CD8-positive, alpha-beta T cell (primary cell): ENCODE measurements at regions of chr6 and their contacts with region 1.

Region 1: DNA sequence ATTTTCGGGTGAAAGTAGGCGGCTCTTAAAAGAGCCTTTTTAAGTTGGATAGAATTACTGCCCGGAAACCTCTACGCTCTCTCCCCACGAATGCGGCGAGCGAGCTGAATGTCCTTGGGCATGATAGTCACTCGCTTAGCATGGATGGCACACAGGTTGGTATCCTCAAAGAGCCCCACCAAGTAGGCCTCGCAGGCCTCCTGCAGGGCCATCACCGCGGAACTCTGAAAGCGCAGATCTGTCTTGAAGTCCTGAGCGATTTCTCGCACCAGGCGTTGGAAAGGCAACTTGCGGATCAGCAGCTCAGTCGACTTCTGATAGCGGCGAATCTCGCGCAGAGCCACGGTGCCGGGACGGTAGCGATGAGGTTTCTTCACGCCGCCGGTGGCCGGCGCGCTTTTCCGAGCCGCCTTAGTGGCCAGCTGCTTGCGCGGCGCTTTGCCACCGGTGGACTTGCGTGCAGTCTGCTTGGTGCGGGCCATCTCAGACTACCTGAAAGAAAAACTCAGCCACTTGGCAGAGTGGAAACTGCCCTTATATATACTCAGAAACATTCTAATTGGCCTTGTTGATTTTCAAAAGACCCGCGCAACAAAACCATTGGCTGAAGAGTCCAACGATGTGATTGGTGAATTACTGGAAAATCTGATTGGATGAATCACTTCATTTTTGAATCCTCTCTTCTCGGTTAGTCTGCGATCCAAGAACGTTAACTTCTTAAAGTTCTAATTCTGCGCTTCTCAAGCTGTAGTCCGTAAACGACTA is 93.9 kb upstream of the BTN3A2 start:
- DNase-seq: peak; percentile 68 to 91 (median 80)
- ATAC-seq: peak; percentile 22
- H3K4me3 ChIP-seq: peak overlapping the region; percentile 65 to 67
- H3K4me3 Mint-ChIP-seq: no peak overlapping the region
- H3K27ac ChIP-seq: peak overlapping the region; percentile 73 to 92
- H3K27ac Mint-ChIP-seq: peak overlapping the region; percentile 73
- H3K4me1 ChIP-seq: peaks cover 22% of the 10 kb centered on the region
- H3K4me1 Mint-ChIP-seq: peaks cover 13% of the 10 kb centered on the region
- H3K27me3 ChIP-seq: no peaks in the 10 kb centered on the region
- H3K27me3 Mint-ChIP-seq: no peaks in the 10 kb centered on the region
- CTCF ChIP-seq: no peak

Region 2: GRCh38 chr6:26103770-26104456 is 167.2 kb before region 1 on chr6:
- CTCF ChIA-PET with region 1: no interaction called
- POLR2A ChIA-PET with region 1: interaction called, 13 read pairs
- intact Hi-C with region 1: loop called in 1 of 2 experiments (anchors 5 kb)
- DNase-seq: peak; percentile 84 to 97 (median 89)
- ATAC-seq: peak; percentile 91
- H3K4me3 ChIP-seq: peak overlapping the region; percentile 52 to 58
- H3K4me3 Mint-ChIP-seq: peak overlapping the region; percentile 85
- H3K27ac ChIP-seq: peak overlapping the region; percentile 85 to 92
- H3K27ac Mint-ChIP-seq: peak overlapping the region; percentile 98
- H3K4me1 ChIP-seq: peaks cover 7% of the 10 kb centered on the region
- H3K4me1 Mint-ChIP-seq: peaks cover 17% of the 10 kb centered on the region
- H3K27me3 ChIP-seq: no peaks in the 10 kb centered on the region
- H3K27me3 Mint-ChIP-seq: no peaks in the 10 kb centered on the region
- CTCF ChIP-seq: peak; percentile 67

Region 3: DNA sequence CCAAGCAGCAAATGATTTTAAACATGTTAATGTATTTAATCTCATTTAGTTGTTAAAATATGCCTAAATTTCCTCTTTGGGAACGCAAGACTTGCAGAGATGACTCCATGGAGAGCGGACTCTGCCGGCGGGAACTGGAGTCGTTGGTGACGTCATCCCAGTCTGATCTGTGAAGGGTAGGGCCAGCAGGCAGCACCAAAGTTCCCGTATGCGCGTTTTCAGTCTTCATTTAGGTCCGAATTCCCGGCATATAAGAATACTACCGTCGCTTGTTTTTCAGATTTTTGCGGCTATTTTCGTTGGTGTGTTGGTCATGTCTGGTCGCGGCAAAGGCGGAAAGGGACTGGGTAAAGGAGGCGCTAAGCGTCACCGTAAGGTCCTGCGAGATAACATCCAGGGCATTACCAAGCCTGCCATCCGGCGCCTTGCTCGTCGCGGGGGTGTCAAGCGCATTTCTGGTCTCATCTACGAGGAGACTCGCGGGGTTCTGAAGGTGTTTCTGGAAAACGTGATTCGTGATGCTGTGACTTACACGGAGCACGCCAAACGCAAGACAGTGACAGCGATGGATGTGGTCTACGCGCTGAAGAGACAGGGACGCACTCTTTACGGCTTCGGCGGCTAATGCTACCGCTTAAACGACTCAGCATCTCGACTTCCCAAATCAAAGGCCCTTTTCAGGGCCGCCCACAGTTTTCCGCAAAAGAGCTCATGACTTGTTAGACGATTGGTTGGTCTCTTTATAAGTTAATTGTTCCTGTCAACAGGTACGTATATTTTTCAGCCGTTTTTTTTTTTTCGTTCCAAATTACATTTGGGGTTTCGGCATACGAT is 66.5 kb before region 1 on chr6:
- CTCF ChIA-PET with region 1: interaction called, 3 read pairs
- POLR2A ChIA-PET with region 1: interaction called, 189 read pairs
- intact Hi-C with region 1: loop called (anchors 1 to 2 kb)
- DNase-seq: peak; percentile 75 to 98 (median 84)
- ATAC-seq: peak; percentile 74
- H3K4me3 ChIP-seq: peak overlapping the region; percentile 54 to 70
- H3K4me3 Mint-ChIP-seq: no peak overlapping the region
- H3K27ac ChIP-seq: peak overlapping the region; percentile 91
- H3K27ac Mint-ChIP-seq: no peak overlapping the region
- H3K4me1 ChIP-seq: peaks cover 31% of the 10 kb centered on the region
- H3K4me1 Mint-ChIP-seq: peaks cover 23% of the 10 kb centered on the region
- H3K27me3 ChIP-seq: no peaks in the 10 kb centered on the region
- H3K27me3 Mint-ChIP-seq: no peaks in the 10 kb centered on the region
- CTCF ChIP-seq: no peak

Region 4: DNA sequence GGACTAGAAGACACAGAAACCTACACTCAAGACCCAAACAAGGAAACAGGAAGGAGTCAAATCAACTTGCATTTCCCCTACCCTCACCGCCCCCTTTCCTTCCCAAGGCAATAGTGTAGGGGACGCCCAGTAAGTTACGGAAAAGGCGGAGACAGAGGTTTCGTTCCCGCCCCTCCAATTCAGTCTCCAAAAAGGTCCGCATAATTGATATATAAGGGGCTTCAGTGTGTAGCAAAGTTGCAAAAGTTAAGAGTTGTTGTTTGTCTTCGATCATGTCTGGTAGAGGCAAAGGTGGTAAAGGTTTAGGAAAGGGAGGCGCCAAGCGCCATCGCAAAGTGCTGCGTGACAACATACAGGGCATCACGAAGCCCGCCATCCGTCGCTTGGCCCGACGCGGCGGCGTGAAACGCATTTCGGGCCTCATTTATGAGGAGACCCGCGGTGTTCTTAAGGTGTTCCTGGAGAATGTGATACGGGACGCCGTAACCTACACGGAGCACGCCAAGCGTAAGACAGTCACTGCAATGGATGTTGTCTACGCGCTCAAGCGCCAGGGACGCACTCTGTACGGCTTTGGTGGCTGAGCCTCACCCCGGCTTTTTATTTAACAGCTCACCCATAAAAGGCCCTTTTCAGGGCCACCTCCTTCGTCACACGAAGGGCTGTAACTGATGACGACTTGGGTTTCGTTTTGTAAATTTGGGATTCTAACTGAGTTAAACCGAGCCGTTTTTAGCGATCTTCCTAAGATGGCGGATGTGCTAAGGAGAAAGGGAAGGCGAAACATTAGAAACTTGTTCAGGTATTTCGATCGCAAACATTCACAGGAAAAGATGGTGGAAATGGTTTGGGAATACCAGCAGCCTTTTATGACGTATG is 30.7 kb before region 1 on chr6:
- CTCF ChIA-PET with region 1: interaction called, 24 read pairs
- POLR2A ChIA-PET with region 1: interaction called, 187 read pairs
- intact Hi-C with region 1: loop called in 1 of 2 experiments (anchors 1 kb)
- DNase-seq: peak; percentile 40 to 93 (median 67)
- ATAC-seq: peak; percentile 81
- H3K4me3 ChIP-seq: peak overlapping the region; percentile 50 to 62
- H3K4me3 Mint-ChIP-seq: peak overlapping the region; percentile 88
- H3K27ac ChIP-seq: peak overlapping the region; percentile 74 to 88
- H3K27ac Mint-ChIP-seq: peak overlapping the region; percentile 98
- H3K4me1 ChIP-seq: peaks cover 8% of the 10 kb centered on the region
- H3K4me1 Mint-ChIP-seq: peaks cover 21% of the 10 kb centered on the region
- H3K27me3 ChIP-seq: no peaks in the 10 kb centered on the region
- H3K27me3 Mint-ChIP-seq: no peaks in the 10 kb centered on the region
- CTCF ChIP-seq: no peak

Region 5: GRCh38 chr6:26312501-26313390 is 41.7 kb after region 1 on chr6:
- CTCF ChIA-PET with region 1: no interaction called
- POLR2A ChIA-PET with region 1: interaction called, 7 read pairs
- intact Hi-C with region 1: loop called (anchors 1 to 5 kb)
- DNase-seq: peak; percentile 74 to 92 (median 87)
- ATAC-seq: peak; percentile 51
- H3K4me3 ChIP-seq: peak overlapping the region; percentile 70 to 76
- H3K4me3 Mint-ChIP-seq: peak overlapping the region; percentile 89
- H3K27ac ChIP-seq: peak overlapping the region; percentile 38 to 49
- H3K27ac Mint-ChIP-seq: peak overlapping the region; percentile 93
- H3K4me1 ChIP-seq: no peaks in the 10 kb centered on the region
- H3K4me1 Mint-ChIP-seq: peaks cover 41% of the 10 kb centered on the region
- H3K27me3 ChIP-seq: no peaks in the 10 kb centered on the region
- H3K27me3 Mint-ChIP-seq: no peaks in the 10 kb centered on the region
- CTCF ChIP-seq: no peak

Region 6: DNA sequence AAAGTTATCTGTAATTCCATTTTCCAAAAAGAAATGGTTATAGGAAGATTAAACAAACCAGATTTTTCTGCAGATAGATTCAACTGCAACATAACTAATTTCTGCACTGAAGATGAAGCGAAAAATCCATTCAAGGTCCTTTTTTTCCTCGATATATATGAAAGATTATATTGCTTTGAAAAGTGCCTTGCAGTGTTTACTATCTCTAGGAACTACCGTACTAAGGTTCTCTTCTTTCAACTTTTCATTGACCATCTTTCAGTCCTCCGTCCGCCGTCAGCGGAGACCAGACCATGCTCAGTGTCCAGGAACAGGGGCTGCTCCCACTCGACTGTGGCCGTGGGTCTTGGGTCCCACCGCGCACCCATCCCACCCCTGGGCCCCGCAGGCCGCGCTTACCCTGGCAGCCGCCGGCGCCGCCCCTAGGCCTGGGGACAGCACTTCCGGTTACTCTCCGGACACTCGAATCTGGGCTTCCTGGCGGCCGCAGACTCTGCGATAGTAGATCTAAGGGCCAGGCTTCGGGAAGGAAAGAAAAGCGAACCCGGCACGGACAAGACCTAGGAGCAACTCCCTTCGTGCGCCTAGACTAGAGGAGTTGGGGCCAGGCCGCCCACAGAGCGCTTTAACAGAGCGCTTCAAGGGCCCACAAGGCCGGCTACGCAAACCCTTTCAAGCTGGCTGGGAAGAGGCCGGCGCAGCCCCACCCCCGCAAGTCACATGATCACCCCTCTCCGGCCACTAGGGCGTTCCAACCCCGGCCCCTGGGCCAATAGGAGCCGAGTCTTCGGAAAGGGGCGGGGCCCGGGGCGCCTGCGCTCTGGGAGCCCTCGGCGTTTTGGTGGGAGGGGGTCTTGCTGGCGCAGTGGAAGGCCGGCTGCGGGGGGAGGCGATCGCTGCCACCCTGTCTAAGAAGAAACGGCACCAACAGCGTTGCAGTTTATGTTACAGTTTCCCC is 388.2 kb after region 1 on chr6 and contains the start of gene ZNF322:
- CTCF ChIA-PET with region 1: no interaction called
- POLR2A ChIA-PET with region 1: no interaction called
- intact Hi-C with region 1: no loop called
- DNase-seq: peak; percentile 69 to 92 (median 86)
- ATAC-seq: peak; percentile 96
- H3K4me3 ChIP-seq: peak within 1 kb of the TSS; percentile 82 to 90
- H3K4me3 Mint-ChIP-seq: peak within 1 kb of the TSS; percentile 86
- H3K27ac ChIP-seq: peak within 1 kb of the TSS; percentile 55 to 60
- H3K27ac Mint-ChIP-seq: peak within 1 kb of the TSS; percentile 56
- H3K4me1 ChIP-seq: peaks cover 9% of the 10 kb centered on the region
- H3K4me1 Mint-ChIP-seq: peaks cover 36% of the 10 kb centered on the region
- H3K27me3 ChIP-seq: peaks cover 0 to 7% of the 10 kb centered on the region in 2 experiments
- H3K27me3 Mint-ChIP-seq: peaks cover 17% of the 10 kb centered on the region
- CTCF ChIP-seq: no peak
- total RNA-seq, gene ZNF322: 0.35 to 0.94 TPM

Region 7: DNA sequence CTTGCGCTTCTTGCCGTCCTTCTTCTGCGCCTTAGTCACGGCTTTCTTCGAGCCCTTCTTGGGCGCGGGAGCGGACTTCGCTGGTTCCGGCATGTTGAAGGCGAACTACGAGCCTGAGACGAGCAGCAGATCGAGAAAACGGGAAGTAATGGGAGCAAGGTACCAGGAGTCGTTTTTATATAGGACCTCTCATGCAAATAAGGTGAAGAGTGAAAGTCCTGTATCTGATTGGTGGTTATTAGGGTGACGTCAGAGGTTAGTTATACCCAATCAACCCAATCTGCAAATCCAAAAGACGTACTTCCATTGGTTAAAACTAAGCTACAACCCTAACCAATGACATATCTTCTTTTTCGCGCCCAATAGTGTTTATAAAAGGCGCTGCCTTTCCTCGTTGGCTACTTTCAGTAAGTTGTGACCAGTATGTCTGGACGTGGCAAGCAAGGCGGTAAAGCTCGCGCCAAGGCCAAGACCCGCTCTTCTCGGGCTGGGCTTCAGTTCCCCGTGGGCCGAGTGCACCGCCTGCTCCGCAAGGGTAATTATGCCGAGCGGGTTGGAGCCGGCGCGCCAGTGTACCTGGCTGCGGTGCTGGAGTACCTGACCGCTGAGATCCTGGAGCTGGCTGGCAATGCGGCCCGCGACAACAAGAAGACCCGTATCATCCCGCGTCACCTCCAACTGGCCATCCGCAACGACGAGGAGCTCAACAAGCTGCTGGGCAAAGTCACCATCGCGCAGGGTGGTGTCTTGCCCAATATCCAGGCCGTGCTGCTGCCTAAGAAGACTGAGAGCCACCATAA is 875.8 kb after region 1 on chr6:
- CTCF ChIA-PET with region 1: no interaction called
- POLR2A ChIA-PET with region 1: interaction called, 13 read pairs
- intact Hi-C with region 1: no loop called
- DNase-seq: peak; percentile 56 to 98 (median 74)
- ATAC-seq: peak; percentile 85
- H3K4me3 ChIP-seq: peak overlapping the region; percentile 71 to 77
- H3K4me3 Mint-ChIP-seq: no peak overlapping the region
- H3K27ac ChIP-seq: peak overlapping the region; percentile 84 to 91
- H3K27ac Mint-ChIP-seq: no peak overlapping the region
- H3K4me1 ChIP-seq: peaks cover 11% of the 10 kb centered on the region
- H3K4me1 Mint-ChIP-seq: peaks cover 13% of the 10 kb centered on the region
- H3K27me3 ChIP-seq: no peaks in the 10 kb centered on the region
- H3K27me3 Mint-ChIP-seq: no peaks in the 10 kb centered on the region
- CTCF ChIP-seq: no peak